AG04450 (cell line): ENCODE measurements at regions of chr3 and their contacts with region 1.

Region 1: DNA sequence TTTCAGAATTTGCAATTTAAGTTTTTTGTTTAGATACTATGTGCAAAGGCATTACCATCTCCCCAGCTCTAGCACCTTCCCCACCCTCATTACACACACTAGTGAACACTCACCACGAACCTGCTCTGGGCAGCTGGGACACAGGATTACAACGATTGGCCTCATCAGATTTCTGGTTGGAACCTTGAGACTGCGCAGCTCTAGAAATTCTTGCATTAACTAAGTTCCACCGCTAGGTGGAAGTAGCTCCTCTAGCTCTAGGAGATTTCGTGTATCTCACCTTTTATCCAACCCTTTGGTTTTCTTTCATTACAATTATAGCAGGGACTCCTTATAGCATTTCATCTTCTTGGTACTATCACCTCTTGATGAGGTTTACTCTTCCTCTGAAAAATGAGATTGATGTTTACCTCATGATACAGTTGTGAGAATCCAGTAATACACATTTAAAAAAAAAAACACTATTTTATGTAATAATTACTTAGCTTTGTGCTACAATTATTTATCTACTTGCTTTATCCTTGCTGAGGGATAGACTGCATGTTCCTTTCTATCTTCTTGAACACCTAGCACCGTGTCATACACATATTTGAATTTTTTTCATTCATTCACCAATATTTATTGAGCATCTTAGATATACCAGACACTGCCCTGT is 28.7 kb upstream of the PLOD2 start:
- DNase-seq: peak; percentile 10
- H3K4me3 ChIP-seq: no peak overlapping the region
- H3K27ac ChIP-seq: no peak overlapping the region
- H3K27me3 ChIP-seq: no peaks in the 10 kb centered on the region
- CTCF ChIP-seq: peak; percentile 80

Region 2: GRCh38 chr3:144516026-144516425 is 1673.6 kb before region 1 on chr3:
- CTCF ChIA-PET with region 1: no interaction called
- POLR2A ChIA-PET with region 1: no interaction called
- DNase-seq: no peak
- H3K4me3 ChIP-seq: no peak overlapping the region
- H3K27ac ChIP-seq: no peak overlapping the region
- H3K27me3 ChIP-seq: no peaks in the 10 kb centered on the region
- CTCF ChIP-seq: no peak

Region 3: GRCh38 chr3:145776782-145777408 is 412.8 kb before region 1 on chr3:
- CTCF ChIA-PET with region 1: interaction called, 60 read pairs
- POLR2A ChIA-PET with region 1: no interaction called
- DNase-seq: peak; percentile 3
- H3K4me3 ChIP-seq: no peak overlapping the region
- H3K27ac ChIP-seq: no peak overlapping the region
- H3K27me3 ChIP-seq: no peaks in the 10 kb centered on the region
- CTCF ChIP-seq: peak; percentile 70

Region 4: DNA sequence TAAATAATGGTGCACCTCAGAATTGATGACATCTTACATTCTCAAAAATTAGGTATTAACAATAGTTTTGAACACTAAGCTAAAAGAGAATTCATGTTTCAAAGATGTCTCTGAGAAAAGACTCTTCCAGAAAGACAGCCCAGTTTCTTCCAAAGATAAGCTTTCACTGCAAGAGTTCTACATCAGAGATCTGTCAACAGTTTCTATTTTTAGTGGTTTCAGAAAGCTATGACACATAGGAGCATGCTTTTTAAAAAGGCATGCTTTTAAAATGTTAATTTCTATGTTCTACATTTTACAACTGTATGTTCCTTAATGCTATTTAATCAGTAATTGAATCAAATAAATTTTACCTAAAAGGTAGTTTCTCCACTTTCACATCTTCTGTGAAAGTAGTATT is 116.8 kb before region 1 on chr3:
- CTCF ChIA-PET with region 1: interaction called, 45 read pairs
- POLR2A ChIA-PET with region 1: no interaction called
- DNase-seq: no peak
- H3K4me3 ChIP-seq: no peak overlapping the region
- H3K27ac ChIP-seq: no peak overlapping the region
- H3K27me3 ChIP-seq: no peaks in the 10 kb centered on the region
- CTCF ChIP-seq: no peak

Region 5: DNA sequence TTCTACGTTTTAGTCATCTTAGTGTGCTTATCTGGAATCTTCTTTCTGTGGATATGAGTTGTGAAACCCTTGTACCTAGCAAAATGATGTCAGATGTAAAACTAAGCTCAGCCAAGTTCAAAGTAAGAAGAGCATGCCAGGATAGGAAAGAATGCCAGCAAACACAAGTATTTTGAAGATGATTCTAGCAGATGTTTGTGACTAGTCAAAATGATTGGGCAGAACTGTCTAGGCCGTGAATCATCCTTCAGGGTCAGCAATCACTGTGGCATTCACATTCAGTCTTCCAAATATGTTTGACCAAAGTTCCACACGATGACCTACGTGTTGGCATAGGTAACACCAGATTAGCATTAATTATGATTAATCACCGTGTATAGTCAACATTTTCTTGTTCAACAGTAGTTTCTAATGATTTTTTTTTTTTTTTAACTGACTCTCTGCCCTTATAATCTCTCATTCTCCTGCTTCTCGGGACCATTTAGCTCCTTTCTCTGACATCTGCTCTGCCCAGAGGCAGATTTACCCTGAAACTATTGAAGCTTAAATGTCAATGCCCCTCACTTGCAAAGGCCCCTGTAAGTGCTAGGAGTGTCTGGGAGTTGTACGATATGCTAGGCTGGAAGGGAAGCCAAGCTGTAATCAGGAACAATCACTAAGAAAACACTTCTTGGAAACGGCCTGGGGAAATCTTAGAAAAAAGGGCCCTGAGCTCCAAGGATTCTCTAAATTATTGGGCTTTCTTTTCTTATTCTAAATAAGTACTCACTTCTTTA is 23.0 kb before region 1 on chr3:
- CTCF ChIA-PET with region 1: interaction called, 42 read pairs
- POLR2A ChIA-PET with region 1: no interaction called
- DNase-seq: no peak
- H3K4me3 ChIP-seq: no peak overlapping the region
- H3K27ac ChIP-seq: peak overlapping the region; percentile 42
- H3K27me3 ChIP-seq: no peaks in the 10 kb centered on the region
- CTCF ChIP-seq: no peak

Region 6: DNA sequence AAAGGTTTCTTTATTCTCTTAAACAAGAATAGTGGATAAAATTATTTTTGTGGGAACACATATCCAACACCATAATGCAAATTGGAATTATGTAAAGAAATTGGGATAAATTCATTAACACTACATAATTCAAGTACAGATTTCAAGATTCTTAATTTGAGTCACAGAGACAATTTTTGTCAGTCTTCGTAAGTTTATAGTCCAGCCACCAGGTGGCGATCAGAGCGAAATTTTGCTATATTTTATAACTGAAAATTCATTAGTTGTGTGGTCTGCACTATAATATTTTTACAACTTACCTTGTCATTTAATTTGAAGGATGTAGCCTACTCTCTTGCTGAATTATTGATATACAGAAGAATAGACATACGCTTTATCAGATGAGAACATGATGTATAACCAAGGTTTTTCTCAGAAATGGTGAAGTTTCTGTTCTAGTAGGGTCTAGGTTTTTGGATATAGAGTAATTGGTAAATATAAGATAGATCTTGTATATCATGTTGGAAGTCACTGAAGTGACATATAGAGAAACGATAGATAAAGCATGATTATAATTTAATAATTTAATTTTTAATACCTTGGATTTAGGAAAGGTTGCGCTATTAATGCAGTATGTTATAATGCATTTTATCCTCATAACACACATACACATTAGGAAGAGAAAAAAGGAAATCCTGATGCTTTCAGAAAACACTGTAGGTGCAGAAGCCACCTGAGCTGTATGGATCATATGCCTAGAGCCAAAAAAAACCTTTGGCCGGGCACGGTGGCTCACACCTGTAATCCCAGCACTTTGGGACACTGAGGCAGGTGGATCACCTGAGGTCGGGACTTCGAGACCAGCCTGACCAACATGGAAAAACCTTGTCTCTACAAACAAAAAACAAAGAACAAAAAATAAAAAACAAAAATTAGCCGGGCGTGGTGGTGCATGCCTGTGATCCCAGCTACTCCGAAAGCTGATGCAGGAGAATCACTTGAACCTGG is 29.5 kb after region 1 on chr3:
- CTCF ChIA-PET with region 1: interaction called, 11 read pairs
- POLR2A ChIA-PET with region 1: no interaction called
- DNase-seq: peak; percentile 20
- H3K4me3 ChIP-seq: no peak overlapping the region
- H3K27ac ChIP-seq: no peak overlapping the region
- H3K27me3 ChIP-seq: no peaks in the 10 kb centered on the region
- CTCF ChIP-seq: peak; percentile 67

Region 7: DNA sequence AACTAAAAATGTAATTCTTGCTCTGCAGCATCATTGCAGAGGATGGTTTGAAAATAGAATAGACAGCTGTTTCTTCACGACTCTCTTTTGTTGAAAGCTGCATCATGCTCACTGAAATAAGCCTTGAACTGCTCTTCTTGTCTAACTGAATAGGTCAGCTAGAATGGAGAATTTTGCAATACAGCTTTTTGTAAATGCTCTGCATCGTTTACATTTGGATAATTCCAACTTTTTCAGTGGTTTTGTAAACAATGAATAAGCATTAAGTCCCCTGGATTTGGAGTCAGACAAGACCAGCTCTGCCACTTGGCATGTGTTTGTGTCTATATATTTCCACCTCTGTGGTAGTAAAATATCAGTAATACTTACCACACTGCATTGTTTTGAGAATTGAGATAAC is 184.5 kb after region 1 on chr3:
- CTCF ChIA-PET with region 1: interaction called, 17 read pairs
- POLR2A ChIA-PET with region 1: no interaction called
- DNase-seq: peak; percentile 46
- H3K4me3 ChIP-seq: no peak overlapping the region
- H3K27ac ChIP-seq: no peak overlapping the region
- H3K27me3 ChIP-seq: no peaks in the 10 kb centered on the region
- CTCF ChIP-seq: no peak

Region 8: DNA sequence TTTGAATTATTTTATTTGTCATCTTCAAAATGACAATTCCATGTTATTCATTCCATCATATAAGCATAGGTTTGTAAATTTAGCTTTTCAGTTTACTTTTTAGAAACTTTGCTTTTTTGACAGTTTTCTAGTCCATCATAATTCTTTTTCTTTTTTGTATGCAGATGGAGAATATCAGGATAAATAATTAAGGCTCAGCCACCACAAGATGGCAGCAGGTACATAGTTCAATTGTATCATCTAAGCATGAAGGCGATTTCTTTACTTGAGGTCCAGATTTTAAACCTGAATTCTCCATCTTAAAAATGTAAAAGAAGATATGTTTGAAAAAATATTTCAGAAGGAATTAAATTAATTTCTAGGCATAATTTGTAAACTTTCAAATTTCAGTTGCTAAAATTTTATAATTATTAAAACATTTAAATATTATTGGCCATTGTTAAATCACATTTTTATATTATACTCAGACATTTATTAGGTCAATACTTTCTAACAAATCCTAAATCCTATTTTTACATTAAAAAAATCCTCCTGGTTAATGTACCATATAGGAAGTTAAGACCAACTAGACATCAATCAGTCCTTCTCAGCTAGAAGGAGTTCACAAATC is 400.4 kb after region 1 on chr3:
- CTCF ChIA-PET with region 1: interaction called, 21 read pairs
- POLR2A ChIA-PET with region 1: no interaction called
- DNase-seq: peak; percentile 15
- H3K4me3 ChIP-seq: no peak overlapping the region
- H3K27ac ChIP-seq: no peak overlapping the region
- H3K27me3 ChIP-seq: no peaks in the 10 kb centered on the region
- CTCF ChIP-seq: peak; percentile 61